HCT116 (cell line): ENCODE measurements at regions of chr19 and their contacts with region 1.

Region 1: DNA sequence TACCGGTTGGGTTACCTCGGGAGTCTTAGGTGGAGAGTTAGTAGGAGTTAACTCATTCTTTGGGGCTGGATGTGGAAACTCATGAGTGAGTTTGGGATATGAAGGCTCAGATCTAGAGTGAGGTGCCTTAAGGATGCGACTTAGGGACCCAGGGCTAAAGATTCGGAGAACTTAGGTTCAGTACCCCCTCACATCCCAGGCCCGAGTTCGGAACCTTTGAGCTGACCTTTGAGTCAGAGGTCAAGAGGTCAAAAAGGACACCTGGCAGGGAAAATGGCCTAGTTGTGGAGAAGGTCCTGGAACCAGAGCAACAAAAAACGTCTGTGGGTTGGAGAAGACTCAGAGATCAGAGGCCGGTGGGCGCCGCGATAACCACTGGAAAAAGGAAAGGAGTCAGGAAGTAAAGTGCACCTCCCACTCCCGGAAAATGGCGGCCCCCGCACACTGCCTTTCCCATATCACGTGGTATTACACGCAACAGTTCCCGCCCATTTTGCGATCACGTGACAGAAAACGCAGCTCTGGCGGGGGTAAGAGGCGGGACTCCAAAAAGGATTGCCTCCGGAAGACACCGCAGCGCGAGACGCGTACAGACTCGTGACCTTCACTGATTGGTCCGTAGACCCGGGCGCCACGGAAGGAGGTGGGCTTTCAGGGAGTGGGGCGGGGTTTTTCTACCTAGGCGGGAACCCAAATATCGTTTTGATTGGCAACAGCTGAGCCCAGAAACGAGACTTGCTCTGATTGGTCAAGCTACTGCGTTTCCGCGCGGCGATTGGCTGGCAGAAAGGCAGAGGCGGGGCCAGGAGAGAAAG is at the start of gene ACTMAP:
- DNase-seq: peak; percentile 100
- ATAC-seq: peak; percentile 91
- H3K4me3 ChIP-seq: peak within 1 kb of the TSS; percentile 67 to 81
- H3K27ac ChIP-seq: peak within 1 kb of the TSS; percentile 90
- H3K4me1 ChIP-seq: peaks cover 19 to 41% of the 10 kb centered on the region in 2 experiments; a peak in 3 of 4 replicates
- H3K27me3 ChIP-seq: no peaks in the 10 kb centered on the region
- CTCF ChIP-seq: no peak
- POLR2A ChIP-seq: peak; percentile 74
- RAD21 ChIP-seq: no peak
- total RNA-seq, gene ACTMAP: 16.8 TPM

Region 2: DNA sequence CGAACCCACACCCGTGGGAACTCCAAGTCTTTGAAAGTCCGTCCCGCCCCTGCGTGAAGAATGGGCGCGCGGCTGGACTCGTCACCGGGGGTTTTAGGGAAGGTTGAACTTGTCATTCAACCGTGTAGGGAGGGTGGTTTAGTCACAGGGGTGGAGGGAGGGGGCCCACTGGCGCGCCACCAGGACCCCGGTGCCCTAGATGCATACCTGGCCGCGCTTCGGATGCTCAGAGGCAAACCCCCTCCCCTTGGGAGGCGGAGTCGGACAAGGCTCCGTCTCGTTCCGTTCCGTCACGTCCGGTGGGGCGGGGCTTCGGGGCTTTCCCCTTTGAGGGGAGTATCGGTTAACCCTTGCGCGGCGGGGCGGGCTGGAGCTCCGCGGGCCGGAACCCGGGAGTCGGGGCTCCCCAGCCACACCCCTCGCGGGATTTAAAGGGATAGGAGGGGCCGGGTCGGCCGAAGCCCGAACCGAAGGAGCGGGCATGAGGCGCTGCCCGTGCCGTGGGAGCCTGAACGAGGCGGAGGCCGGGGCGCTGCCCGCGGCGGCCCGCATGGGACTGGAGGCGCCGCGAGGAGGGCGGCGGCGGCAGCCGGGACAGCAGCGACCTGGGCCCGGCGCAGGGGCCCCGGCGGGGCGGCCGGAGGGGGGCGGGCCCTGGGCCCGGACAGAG is 33.5 kb before region 1 on chr19 and contains the starts of genes COQ8B and ITPKC:
- CTCF ChIA-PET with region 1: no interaction called
- POLR2A ChIA-PET with region 1: interaction called, 11 read pairs
- RAD21 ChIA-PET with region 1: no interaction called
- intact Hi-C with region 1: loop called (anchors 2 kb)
- DNase-seq: peak; percentile 95
- ATAC-seq: peak; percentile 56
- H3K4me3 ChIP-seq: peak within 1 kb of the TSS; percentile 63 to 84
- H3K27ac ChIP-seq: peak within 1 kb of the TSS; percentile 92
- H3K4me1 ChIP-seq: peaks cover 13 to 61% of the 10 kb centered on the region in 2 experiments
- H3K27me3 ChIP-seq: no peaks in the 10 kb centered on the region
- CTCF ChIP-seq: no peak
- POLR2A ChIP-seq: no peak
- RAD21 ChIP-seq: no peak
- total RNA-seq, gene COQ8B: 47.1 TPM
- total RNA-seq, gene ITPKC: 11.4 TPM

Region 3: GRCh38 chr19:40777937-40778705 is 27.9 kb after region 1 on chr19 and contains the start of gene RAB4B:
- CTCF ChIA-PET with region 1: interaction called, 6 read pairs
- POLR2A ChIA-PET with region 1: interaction called, 24 read pairs
- RAD21 ChIA-PET with region 1: interaction called in 1 of 2 experiments, 3 read pairs
- intact Hi-C with region 1: no loop called
- DNase-seq: peak; percentile 99
- ATAC-seq: peak; percentile 84
- H3K4me3 ChIP-seq: peak within 1 kb of the TSS; percentile 67 to 68
- H3K27ac ChIP-seq: peak within 1 kb of the TSS; percentile 92
- H3K4me1 ChIP-seq: peaks cover 15 to 34% of the 10 kb centered on the region in 2 experiments
- H3K27me3 ChIP-seq: no peaks in the 10 kb centered on the region
- CTCF ChIP-seq: no peak
- POLR2A ChIP-seq: no peak
- RAD21 ChIP-seq: no peak
- total RNA-seq, gene RAB4B: 18.7 TPM

Region 4: DNA sequence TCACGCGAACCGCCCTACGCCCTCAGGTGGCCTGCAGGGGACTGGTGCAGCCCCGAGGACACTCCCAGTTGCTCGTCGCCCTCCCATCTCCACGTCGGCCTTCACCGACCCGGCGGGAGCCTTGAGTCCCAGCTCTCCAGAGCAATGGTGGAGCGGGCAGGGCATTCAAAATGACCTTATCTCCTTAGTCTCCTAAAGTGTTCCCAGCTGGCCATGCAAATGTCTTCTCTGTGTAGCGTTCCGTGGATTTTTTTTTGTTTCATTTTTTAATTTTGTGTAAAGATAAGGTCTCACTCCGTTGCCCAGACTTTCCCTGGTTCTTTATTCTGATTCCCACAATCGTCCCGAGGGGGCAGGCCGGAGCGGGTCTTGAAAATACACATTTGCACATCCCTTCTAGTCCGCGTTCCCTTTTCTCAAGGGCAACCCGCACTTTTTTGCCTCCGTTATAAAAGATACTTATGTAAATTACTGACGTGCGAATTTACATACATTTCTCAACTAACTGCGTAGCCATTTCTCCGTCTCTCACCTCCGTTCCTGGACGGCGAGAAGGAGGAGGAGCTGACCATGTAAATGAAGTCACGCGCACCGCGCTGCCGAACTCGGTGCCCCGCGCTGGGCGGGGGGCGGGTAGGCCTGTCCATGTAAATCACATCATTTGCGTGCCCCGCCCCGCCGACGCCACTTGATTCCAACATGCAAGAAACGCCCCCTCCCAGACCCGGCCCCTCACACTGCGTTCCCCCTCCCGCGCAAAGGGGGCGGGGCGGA is 48.1 kb after region 1 on chr19:
- CTCF ChIA-PET with region 1: interaction called, 4 read pairs
- POLR2A ChIA-PET with region 1: interaction called, 8 read pairs
- RAD21 ChIA-PET with region 1: no interaction called
- intact Hi-C with region 1: loop called (anchors 2 kb)
- DNase-seq: peak; percentile 99
- ATAC-seq: peak; percentile 85
- H3K4me3 ChIP-seq: peak overlapping the region; percentile 55 to 88
- H3K27ac ChIP-seq: peak overlapping the region; percentile 87
- H3K4me1 ChIP-seq: peaks cover 10 to 42% of the 10 kb centered on the region in 2 experiments
- H3K27me3 ChIP-seq: no peaks in the 10 kb centered on the region
- CTCF ChIP-seq: peak; percentile 14 to 47 (median 30); a peak in 3 of 6 replicates
- POLR2A ChIP-seq: no peak
- RAD21 ChIP-seq: no peak

Region 5: DNA sequence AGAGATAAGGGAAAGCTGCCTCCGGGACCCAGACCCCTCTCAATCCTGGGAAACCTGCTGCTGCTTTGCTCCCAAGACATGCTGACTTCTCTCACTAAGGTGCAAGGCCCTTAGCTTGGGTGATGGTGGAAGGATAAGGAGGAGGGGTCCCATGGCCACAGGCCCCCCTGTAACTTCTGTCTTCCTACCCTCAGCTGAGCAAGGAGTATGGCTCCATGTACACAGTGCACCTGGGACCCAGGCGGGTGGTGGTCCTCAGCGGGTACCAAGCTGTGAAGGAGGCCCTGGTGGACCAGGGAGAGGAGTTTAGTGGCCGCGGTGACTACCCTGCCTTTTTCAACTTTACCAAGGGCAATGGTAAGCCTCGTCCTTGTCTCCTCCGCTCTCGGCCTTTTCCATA is 366.0 kb after region 1 on chr19:
- CTCF ChIA-PET with region 1: no interaction called
- POLR2A ChIA-PET with region 1: no interaction called
- RAD21 ChIA-PET with region 1: no interaction called
- intact Hi-C with region 1: no loop called
- DNase-seq: no peak
- ATAC-seq: no peak
- H3K4me3 ChIP-seq: no peak overlapping the region
- H3K27ac ChIP-seq: no peak overlapping the region
- H3K4me1 ChIP-seq: no peaks in the 10 kb centered on the region
- H3K27me3 ChIP-seq: peaks cover 3% of the 10 kb centered on the region; the same call in 1 of the 2 replicates
- CTCF ChIP-seq: no peak
- POLR2A ChIP-seq: no peak
- RAD21 ChIP-seq: no peak